ENCODE measurements at regions of chr4 and their contacts with region 1.

Region 1: DNA sequence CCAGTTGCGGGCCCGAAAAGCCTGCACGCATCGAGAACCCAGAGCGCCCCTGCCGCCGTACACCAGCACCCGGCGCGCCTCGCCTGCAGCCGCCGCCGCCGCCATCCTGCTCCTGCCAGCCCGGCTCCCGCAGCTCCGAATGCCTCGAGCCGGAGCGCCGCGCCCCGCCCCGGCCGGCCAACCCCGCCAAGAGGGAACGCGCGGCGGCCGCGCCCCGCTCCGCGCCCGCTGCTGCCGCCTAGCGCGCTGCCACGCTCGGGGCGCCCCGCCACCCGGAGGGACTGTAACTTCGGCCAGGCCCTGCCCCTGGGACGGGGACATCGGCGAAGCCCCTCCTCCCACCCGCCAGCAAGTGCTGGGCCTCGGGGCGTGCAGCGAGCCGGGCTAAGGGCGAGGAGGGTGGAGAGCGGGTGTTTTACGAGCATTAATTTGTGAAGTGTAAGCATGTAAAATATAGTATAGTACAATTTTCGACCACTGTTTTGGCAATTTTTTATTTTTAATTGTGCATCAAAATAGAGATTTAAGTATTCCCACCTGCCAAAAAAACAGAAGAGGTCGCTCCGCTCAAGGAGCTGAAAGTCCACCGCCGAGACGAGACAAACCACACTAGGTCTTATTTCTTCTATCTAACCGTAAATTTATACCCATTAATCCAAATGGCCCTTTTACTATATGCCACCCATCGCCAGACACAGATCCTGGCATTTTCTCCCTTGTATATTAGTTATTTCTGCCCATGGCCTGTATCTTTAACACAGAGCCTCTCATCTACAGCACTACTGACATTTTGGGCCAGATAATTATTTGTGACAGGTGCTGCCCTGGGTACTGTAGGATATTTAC is at the start of gene QDPR:
- DNase-seq: peak; percentile 92
- H3K4me3 Mint-ChIP-seq: peak within 1 kb of the TSS; percentile 96
- H3K27ac Mint-ChIP-seq: peak within 1 kb of the TSS; percentile 91
- H3K4me1 Mint-ChIP-seq: peaks cover 18% of the 10 kb centered on the region
- H3K27me3 Mint-ChIP-seq: peaks cover 11% of the 10 kb centered on the region
- total RNA-seq, gene QDPR: 31.8 and 34.4 TPM in 2 replicates

Region 2: GRCh38 chr4:16225863-16226815 is 1286.0 kb before region 1 on chr4 and contains the start of gene TAPT1:
- intact Hi-C with region 1: loop called (anchors 5 kb)
- DNase-seq: peak; percentile 94
- H3K4me3 Mint-ChIP-seq: peak within 1 kb of the TSS; percentile 90
- H3K27ac Mint-ChIP-seq: peak within 1 kb of the TSS; percentile 98
- H3K4me1 Mint-ChIP-seq: peaks cover 45% of the 10 kb centered on the region
- H3K27me3 Mint-ChIP-seq: no peaks in the 10 kb centered on the region
- total RNA-seq, gene TAPT1: 27.2 and 29.3 TPM in 2 replicates

Region 3: GRCh38 chr4:17544205-17544604 is 32.0 kb after region 1 on chr4:
- intact Hi-C with region 1: no loop called
- DNase-seq: no peak
- H3K4me3 Mint-ChIP-seq: no peak overlapping the region
- H3K27ac Mint-ChIP-seq: no peak overlapping the region
- H3K4me1 Mint-ChIP-seq: peaks cover 3% of the 10 kb centered on the region
- H3K27me3 Mint-ChIP-seq: peaks cover 12% of the 10 kb centered on the region

Measured in activated CD4-positive, alpha-beta T cell treated with anti-CD3 and anti-CD28 coated beads, Interleukin-2, amount 10 ng/mL, durations not matched to agents 24 days and 14 days (primary cell).